Naive thymus-derived CD4-positive, alpha-beta T cell (primary cell): ENCODE measurements at regions of chr12 and their contacts with region 1.

Region 1: DNA sequence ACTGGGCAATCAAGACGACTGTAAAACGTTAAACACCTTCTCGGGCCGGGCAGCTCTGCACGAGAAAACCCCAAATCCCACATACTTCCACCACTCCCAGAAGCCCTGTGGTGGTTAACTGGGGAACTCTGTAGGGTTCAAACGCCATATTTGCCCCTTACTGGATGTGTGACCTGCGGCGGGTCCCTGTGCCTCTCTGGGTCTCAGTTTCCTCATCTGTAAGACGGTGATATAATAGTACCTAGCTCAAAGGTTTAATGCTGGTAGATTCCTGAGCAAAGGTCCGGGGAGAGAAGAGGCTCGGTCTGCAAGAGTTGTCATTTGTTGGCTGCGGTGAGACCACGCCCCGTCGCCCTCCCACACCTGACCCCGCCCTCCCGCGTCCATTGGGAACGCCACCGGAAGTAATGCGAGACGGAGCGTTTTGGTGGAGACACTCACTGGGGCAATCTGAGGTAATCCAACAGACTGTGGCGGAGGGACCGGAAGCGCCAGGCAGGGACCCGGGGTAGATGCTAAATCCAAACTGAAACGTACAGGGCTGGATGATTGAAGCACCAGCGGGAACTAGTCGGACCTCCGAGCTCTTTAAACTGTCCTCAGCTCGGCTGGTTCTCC is 661 bp upstream of the OGFOD2 start:
- DNase-seq: peak; percentile 92 to 98 (median 98)
- ATAC-seq: peak; percentile 92
- H3K4me3 ChIP-seq: peak overlapping the region; percentile 100
- H3K4me3 Mint-ChIP-seq: peak overlapping the region; percentile 92 to 99 (median 97)
- H3K27ac ChIP-seq: peak overlapping the region; percentile 98
- H3K27ac Mint-ChIP-seq: peak overlapping the region; percentile 99 to 100 (median 99)
- H3K4me1 ChIP-seq: peaks cover 18 to 23% of the 10 kb centered on the region in 2 donors
- H3K4me1 Mint-ChIP-seq: peaks cover 17 to 39% (median 30%) of the 10 kb centered on the region in 7 donors
- H3K27me3 ChIP-seq: no peaks in the 10 kb centered on the region
- H3K27me3 Mint-ChIP-seq: peaks cover 0 to 3% (median 0%) of the 10 kb centered on the region in 5 donors

Region 2: DNA sequence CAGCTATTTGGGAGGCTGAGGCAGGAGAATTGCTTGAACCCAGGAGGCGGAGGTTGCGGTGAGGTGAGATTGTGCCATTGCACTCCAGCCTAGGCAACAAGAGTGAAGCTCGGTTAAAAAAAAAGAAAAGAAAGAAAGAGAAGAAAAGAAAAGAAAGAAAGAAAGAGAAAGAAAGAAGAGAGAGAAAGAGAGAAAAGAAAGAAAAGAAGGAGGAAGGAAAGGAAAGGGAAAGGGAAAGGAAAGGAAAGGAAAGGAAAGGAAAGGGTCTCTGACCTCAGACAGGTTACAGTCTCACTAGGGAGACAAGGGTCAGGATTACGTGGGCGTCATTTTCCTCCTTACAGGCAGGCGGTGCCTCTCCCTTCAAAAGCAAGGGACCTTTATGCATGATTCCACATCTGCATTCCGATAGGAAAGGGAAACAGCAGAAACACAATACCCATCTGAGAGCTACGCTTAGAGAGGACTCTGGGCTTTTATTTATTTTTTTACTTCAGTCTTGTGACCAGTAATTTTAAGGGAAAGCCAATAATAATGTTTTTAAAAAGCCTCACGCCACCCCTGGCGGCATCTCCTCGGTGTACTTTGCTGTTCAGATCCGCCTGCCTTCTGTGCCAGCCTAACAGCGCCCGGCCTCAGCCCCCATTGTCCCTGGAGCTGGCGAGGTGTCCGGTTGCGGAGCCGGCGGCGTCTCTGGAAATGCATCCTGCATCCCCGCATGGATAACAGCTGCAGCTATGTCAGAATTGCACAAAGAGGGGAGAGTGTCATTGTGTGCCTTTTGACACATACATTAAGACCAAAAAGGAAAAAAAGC is 140.1 kb before region 1 on chr12:
- CTCF ChIA-PET with region 1: no interaction called
- POLR2A ChIA-PET with region 1: interaction called, 10 read pairs
- intact Hi-C with region 1: loop called in 1 of 2 experiments (anchors 1 kb)
- DNase-seq: peak in 2 of 9 donors; percentile 27 to 33
- ATAC-seq: peak; percentile 30
- H3K4me3 ChIP-seq: peak overlapping the region; percentile 55
- H3K4me3 Mint-ChIP-seq: peak overlapping the region; percentile 85 to 99 (median 92)
- H3K27ac ChIP-seq: peak overlapping the region; percentile 50
- H3K27ac Mint-ChIP-seq: peak overlapping the region; percentile 87 to 98 (median 95)
- H3K4me1 ChIP-seq: peaks cover 0 to 13% of the 10 kb centered on the region in 2 donors
- H3K4me1 Mint-ChIP-seq: peaks cover 30 to 48% (median 44%) of the 10 kb centered on the region in 7 donors
- H3K27me3 ChIP-seq: no peaks in the 10 kb centered on the region
- H3K27me3 Mint-ChIP-seq: peaks cover 0 to 29% (median 0%) of the 10 kb centered on the region in 5 donors

Region 3: DNA sequence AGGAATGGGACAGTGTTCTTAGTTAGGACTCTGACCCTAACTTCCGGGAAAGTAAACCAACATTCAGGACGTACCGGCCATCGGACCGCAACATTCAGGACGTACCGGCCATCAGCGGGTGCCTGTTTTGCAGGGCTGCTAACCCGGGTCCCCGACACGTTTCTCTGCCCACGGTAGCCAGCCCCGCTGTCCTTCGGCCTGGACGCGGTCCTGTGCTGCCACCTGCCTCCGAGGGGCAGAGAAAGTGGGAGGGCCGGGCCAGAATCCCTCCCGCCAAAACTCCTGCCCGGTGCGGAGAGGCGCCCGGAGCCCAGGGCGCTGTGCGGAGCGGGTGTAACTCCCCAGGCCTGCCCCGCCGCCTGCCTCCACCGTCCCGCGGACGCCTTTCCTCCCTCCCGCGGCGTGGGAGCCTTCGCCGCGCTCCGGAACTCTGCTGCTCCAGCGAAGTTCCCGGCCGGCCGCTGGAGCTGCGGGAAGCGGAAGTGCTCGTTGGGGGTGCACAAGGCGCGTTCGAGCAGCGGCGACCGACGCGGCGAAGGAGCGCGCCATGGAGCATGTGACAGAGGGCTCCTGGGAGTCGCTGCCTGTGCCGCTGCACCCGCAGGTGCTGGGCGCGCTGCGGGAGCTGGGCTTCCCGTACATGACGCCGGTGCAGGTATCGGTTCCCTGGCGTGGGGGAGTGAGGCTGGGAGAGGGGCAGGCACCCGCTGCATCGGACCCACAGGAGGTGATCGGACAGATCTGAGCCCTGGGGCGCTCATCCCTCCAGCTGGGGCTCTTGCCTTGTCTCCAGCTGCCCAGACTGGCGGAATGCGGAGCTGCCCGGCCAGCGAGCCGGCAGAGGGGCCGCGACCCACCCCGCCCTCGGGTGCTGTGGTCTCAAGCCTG is 627.5 kb after region 1 on chr12 and contains the start of gene DDX55:
- CTCF ChIA-PET with region 1: no interaction called
- POLR2A ChIA-PET with region 1: interaction called, 3 read pairs
- intact Hi-C with region 1: loop called (anchors 1 to 2 kb)
- DNase-seq: peak; percentile 77 to 87 (median 86)
- ATAC-seq: peak; percentile 96
- H3K4me3 ChIP-seq: peak within 1 kb of the TSS; percentile 99
- H3K4me3 Mint-ChIP-seq: peak within 1 kb of the TSS; percentile 89 to 99 (median 97)
- H3K27ac ChIP-seq: peak within 1 kb of the TSS; percentile 84
- H3K27ac Mint-ChIP-seq: peak within 1 kb of the TSS; percentile 83 to 98 (median 93)
- H3K4me1 ChIP-seq: peaks cover 4 to 8% of the 10 kb centered on the region in 2 donors
- H3K4me1 Mint-ChIP-seq: peaks cover 11 to 47% (median 30%) of the 10 kb centered on the region in 7 donors
- H3K27me3 ChIP-seq: no peaks in the 10 kb centered on the region
- H3K27me3 Mint-ChIP-seq: no peaks in the 10 kb centered on the region
- total RNA-seq, gene DDX55: 26.0 to 54.0 (median 43.4) TPM

Region 4: DNA sequence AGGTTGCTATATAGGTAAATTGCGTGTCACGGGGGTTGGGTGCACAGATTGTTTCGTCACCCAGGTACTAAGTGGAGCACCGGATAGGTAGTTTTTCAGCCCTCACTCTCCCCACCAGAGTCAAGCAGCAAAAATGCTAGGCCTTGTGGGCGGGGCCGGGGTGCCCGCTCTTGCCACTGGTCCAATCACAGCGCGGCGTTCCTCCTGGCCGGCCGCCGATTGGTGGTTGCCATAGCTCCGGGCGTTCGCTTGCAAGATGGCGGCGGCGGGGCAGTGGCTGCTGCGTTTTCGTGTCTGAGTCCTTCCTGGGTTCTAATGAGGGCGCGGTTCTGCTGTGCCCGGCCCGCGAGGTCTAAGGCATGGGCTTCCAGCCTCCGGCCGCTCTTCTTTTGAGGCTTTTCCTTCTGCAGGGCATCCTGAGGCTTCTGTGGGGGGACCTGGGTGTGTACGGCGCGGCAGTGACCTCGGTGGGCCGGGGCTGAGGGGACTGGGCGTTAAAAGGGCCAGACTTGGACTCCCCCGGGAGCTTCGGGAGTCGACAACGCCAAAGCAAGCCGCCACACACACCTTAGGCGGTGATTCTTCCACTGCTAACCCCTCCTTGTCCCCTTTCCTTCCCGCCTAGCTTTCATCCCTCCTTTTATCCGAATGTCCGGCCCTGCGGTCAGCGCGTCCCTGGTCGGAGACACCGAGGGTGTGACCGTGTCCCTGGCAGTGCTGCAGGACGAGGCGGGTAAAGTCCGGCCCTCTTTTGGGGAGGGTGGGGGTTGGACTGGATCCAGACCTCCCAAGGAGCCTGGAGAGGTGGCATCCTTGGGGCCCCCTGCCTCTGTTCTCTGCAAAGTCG is 696.7 kb after region 1 on chr12 and contains the start of gene TCTN2:
- CTCF ChIA-PET with region 1: no interaction called
- POLR2A ChIA-PET with region 1: no interaction called
- intact Hi-C with region 1: loop called in 1 of 2 experiments (anchors 5 kb)
- DNase-seq: peak; percentile 81 to 93 (median 91)
- ATAC-seq: peak; percentile 100
- H3K4me3 ChIP-seq: peak within 1 kb of the TSS; percentile 75
- H3K4me3 Mint-ChIP-seq: peak within 1 kb of the TSS; percentile 75 to 92 (median 86)
- H3K27ac ChIP-seq: peak within 1 kb of the TSS; percentile 69
- H3K27ac Mint-ChIP-seq: peak within 1 kb of the TSS; percentile 31 to 86 (median 68)
- H3K4me1 ChIP-seq: peaks cover 3 to 10% of the 10 kb centered on the region in 2 donors
- H3K4me1 Mint-ChIP-seq: peaks cover 5 to 19% (median 11%) of the 10 kb centered on the region in 7 donors
- H3K27me3 ChIP-seq: no peaks in the 10 kb centered on the region
- H3K27me3 Mint-ChIP-seq: no peaks in the 10 kb centered on the region
- total RNA-seq, gene TCTN2: 2.5 to 9.1 (median 5.3) TPM

Region 5: GRCh38 chr12:123829561-123829960 is 855.2 kb after region 1 on chr12:
- CTCF ChIA-PET with region 1: no interaction called
- POLR2A ChIA-PET with region 1: no interaction called
- intact Hi-C with region 1: no loop called
- DNase-seq: no peak
- ATAC-seq: no peak
- H3K4me3 ChIP-seq: no peak overlapping the region
- H3K4me3 Mint-ChIP-seq: no peak overlapping the region
- H3K27ac ChIP-seq: no peak overlapping the region
- H3K27ac Mint-ChIP-seq: no peak overlapping the region
- H3K4me1 ChIP-seq: no peaks in the 10 kb centered on the region
- H3K4me1 Mint-ChIP-seq: peaks cover 0 to 11% (median 0%) of the 10 kb centered on the region in 7 donors
- H3K27me3 ChIP-seq: no peaks in the 10 kb centered on the region
- H3K27me3 Mint-ChIP-seq: peaks cover 0 to 25% (median 7%) of the 10 kb centered on the region in 5 donors